ENCODE measurements at regions of chr5 and their contacts with region 1.

Region 1: DNA sequence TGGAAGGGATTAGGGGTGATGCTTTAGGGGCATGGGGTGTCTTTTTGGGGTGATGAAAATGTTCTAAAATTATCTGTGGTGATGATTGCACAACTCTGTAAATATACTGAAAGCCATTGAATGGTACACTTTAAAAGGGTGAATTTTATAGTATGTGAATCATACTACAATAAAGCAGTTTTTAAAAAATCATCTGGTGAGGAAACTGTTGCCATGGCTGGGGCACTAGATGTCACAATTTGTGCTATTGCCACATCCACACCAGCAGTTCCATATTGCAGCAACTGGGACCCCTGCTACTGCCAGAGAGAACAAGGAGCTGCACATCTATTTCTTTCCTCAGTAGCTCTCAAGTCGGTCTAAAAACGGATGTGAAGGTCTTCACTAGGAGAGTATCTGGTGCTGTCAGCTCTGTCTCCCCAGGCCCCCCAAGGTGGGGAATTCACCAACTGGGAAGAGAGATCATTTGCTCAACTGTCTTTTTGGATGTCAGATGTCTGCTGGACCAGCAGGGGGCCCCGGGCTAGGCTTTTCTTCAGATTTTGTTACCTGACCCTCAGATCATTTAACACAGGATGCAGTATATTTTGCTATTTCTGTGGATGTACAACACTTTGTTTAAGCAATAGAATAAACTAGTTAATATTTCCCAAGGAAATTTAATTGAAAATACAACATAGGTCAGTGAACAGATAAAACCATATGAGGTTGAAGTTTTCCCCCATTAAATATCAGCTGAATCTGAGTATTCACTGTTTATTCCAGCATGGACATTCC is 13.2 kb downstream of the CMYA5 start:
- DNase-seq: peak in 1 of 2 experiments; percentile 60
- H3K4me3 ChIP-seq: no peak overlapping the region
- H3K27ac ChIP-seq: no peak overlapping the region
- H3K4me1 ChIP-seq: peaks cover 0 to 3% (median 0%) of the 10 kb centered on the region in 4 experiments; a peak in 1 of 7 replicates
- H3K27me3 ChIP-seq: no peaks in the 10 kb centered on the region
- CTCF ChIP-seq: peak; percentile 47 to 55 (median 55)
- EP300 ChIP-seq: no peak
- POLR2A ChIP-seq: no peak
- RAD21 ChIP-seq: peak; percentile 33 to 56; a peak in 3 of 4 replicates

Region 2: DNA sequence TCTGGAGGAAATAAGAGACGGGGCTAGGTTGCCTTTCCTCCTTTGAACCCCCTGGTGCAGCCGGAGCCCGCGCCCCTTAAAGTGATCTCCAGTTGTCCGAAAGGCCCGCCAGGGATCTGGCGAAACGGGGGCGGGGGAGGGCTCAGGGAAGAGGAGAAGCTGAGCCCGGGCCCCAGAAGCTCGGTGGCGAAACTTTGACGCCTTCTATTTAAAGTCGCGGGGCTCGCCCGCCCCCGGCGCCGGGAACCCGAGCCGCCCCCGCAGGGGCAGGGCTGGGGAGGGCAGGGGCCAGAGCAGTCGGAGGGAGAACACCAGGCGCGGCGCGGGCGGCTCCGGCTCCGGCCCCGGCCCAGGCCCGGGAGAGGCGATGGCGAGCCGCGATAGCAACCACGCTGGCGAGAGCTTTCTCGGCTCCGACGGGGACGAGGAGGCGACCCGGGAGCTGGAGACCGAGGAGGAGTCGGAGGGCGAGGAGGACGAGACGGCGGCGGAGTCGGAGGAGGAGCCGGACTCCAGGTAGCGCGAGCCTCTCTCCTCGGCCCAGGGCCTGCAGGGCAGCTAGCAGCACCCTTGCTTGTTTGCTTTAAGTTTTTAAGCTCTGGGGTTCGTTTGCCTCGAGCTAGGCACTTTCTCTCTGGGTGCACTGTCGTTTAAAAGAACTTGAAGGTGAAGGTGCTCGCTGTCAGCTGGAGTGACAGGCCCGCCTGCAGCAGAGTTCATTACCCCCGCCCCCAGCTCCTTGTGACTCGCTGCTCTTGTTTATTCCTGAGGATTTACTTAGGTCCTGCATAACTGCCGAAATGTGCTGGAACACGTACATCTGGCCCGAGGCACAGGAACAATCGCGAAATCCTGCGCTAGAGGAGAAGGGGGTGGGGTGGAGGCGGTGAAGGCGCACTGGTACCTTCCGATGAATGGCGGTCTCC is 13.0 kb before region 1 on chr5 and contains the start of gene CMYA5:
- CTCF ChIA-PET with region 1: interaction called, 45 read pairs
- POLR2A ChIA-PET with region 1: interaction called, 5 read pairs
- DNase-seq: peak in 1 of 2 experiments; percentile 80
- H3K4me3 ChIP-seq: peak within 1 kb of the TSS; percentile 47 to 66 (median 48)
- H3K27ac ChIP-seq: no peak within 1 kb of the TSS
- H3K4me1 ChIP-seq: peaks cover 0 to 7% (median 1%) of the 10 kb centered on the region in 4 experiments; a peak in 3 of 7 replicates
- H3K27me3 ChIP-seq: no peaks in the 10 kb centered on the region; a peak in 1 of 7 replicates
- CTCF ChIP-seq: no peak
- EP300 ChIP-seq: no peak
- POLR2A ChIP-seq: peak in 1 of 2 experiments; percentile 12; a peak in 1 of 3 replicates
- RAD21 ChIP-seq: no peak
- total RNA-seq, gene CMYA5: 0.65 and 0.95 TPM in 2 replicates

Region 3: GRCh38 chr5:79774171-79774854 is 71.5 kb after region 1 on chr5:
- CTCF ChIA-PET with region 1: interaction called, 29 read pairs
- POLR2A ChIA-PET with region 1: no interaction called
- DNase-seq: peak; percentile 76 to 83
- H3K4me3 ChIP-seq: no peak overlapping the region
- H3K27ac ChIP-seq: no peak overlapping the region
- H3K4me1 ChIP-seq: peaks cover 0 to 4% (median 0%) of the 10 kb centered on the region in 4 experiments; a peak in 3 of 7 replicates
- H3K27me3 ChIP-seq: no peaks in the 10 kb centered on the region
- CTCF ChIP-seq: peak; percentile 62 to 91 (median 81)
- EP300 ChIP-seq: no peak
- POLR2A ChIP-seq: no peak
- RAD21 ChIP-seq: peak; percentile 80 to 87

Region 4: DNA sequence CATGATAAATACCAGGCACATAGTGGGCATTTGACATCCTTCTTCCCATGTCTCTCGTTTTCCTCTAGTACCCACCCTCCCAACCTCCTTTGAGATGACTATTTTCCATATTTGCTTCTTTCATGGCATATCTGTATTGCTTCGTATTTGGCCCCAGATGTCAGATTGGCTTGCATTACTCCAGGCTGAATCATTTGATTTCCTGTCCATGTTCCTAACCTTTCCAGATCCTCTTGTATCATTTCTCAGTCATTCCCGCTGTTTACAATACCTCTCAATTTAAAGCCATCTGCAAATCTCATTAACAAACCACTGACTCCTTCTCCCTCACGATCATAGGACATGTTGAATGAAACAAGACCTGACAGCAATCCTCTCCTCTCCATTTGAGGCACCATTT is 268.4 kb after region 1 on chr5:
- CTCF ChIA-PET with region 1: no interaction called
- POLR2A ChIA-PET with region 1: no interaction called
- DNase-seq: no peak
- H3K4me3 ChIP-seq: no peak overlapping the region
- H3K27ac ChIP-seq: no peak overlapping the region
- H3K4me1 ChIP-seq: peaks cover 0 to 2% (median 0%) of the 10 kb centered on the region in 4 experiments; a peak in 1 of 7 replicates
- H3K27me3 ChIP-seq: 0 out of 7 replicates have a peak, but pooled peaks cover 0 to 2% (median 0%) of the 10 kb centered on the region in 4 experiments
- CTCF ChIP-seq: no peak
- EP300 ChIP-seq: no peak
- POLR2A ChIP-seq: no peak
- RAD21 ChIP-seq: no peak